Aorta (tissue), 5 donors: ENCODE measurements at regions of chr14 and their contacts with region 1.

Region 1: DNA sequence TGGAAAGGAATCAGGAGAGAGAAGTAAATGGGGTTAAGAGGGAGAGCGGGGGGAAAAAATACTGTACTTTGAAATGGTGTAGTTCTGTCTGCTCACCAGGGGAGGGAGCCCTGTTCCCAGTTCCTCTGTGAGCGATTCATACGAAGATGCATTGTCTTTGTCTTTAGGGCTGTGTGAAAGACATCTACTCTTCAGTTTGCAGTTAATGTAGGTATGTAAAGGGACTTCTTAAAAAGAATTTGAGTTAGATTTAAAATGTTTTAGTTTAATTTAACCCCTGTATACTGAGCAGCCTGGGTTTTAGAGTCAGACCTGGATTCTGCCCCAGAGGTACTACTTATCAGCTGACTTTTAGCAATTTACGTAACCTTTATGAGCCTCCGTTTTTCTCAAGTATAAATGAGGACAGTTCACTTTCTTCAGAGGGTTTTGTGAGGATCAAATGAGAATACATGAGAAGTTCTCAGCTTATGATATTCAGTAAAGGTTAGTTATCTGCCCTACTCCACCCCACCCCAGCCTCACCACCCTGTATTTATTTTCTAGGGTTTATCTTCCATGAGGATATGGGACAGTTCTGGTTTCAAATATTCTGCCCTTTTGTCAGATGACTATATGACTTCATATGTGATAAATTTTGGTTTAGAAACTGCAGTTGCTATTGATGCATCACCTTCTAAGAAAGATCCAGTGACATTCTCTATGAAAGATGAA is 82.5 kb upstream of the EVL start:
- DNase-seq: no peak
- ATAC-seq: peak; percentile 92
- H3K4me3 ChIP-seq: peak overlapping the region in 1 of 2 donors; percentile 28
- H3K27ac ChIP-seq: no peak overlapping the region
- H3K4me1 ChIP-seq: no peaks in the 10 kb centered on the region
- H3K27me3 ChIP-seq: no peaks in the 10 kb centered on the region

Region 2: DNA sequence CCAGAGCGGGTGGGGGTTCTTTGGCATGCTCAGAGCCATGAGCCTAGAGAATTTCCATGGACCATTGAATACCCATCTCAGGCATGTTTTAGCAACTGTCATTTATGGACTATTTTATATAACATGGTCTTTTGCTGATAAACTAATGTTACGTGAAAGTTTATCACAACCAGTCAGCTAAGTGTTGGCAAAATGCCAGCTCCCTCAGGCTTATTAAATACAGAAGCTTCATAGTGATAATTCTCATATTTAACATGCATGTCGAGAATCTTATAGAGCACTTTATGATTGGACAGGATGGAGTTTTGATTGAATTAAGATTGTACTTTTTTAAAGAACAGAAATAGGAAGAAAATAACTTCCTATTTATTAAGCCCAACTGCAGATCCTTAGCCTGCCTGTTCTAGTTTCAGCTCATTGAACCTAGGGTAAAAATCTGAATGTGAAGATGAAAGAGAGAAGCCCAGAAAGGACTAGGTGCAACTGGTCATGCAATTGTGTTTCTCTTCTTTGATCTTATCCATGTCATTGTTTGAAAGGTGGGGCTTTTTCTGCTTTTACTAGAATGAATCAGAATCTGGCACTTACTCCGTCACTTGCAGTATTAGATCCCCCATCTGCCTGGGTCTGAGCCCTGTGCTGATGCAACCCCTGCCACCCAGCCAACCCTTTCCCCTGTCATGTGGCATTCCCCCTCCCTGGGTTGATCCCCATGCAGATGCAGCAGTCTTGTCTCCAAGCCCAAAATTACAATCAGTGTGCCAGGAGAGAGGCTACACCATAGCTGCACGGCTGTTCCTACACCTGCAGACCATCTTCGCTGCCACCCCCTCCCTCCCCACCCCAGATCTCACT is 52.0 kb before region 1 on chr14:
- intact Hi-C with region 1: no loop called
- DNase-seq: no peak
- ATAC-seq: peak; percentile 22
- H3K4me3 ChIP-seq: no peak overlapping the region
- H3K27ac ChIP-seq: no peak overlapping the region
- H3K4me1 ChIP-seq: no peaks in the 10 kb centered on the region
- H3K27me3 ChIP-seq: no peaks in the 10 kb centered on the region

Region 3: GRCh38 chr14:100108042-100108825 is 125.5 kb after region 1 on chr14:
- intact Hi-C with region 1: loop called (anchors 2 kb)
- DNase-seq: peak; percentile 87 to 94
- ATAC-seq: peak; percentile 82
- H3K4me3 ChIP-seq: no peak overlapping the region
- H3K27ac ChIP-seq: no peak overlapping the region
- H3K4me1 ChIP-seq: peaks cover 0 to 5% of the 10 kb centered on the region in 2 donors
- H3K27me3 ChIP-seq: no peaks in the 10 kb centered on the region

Region 4: DNA sequence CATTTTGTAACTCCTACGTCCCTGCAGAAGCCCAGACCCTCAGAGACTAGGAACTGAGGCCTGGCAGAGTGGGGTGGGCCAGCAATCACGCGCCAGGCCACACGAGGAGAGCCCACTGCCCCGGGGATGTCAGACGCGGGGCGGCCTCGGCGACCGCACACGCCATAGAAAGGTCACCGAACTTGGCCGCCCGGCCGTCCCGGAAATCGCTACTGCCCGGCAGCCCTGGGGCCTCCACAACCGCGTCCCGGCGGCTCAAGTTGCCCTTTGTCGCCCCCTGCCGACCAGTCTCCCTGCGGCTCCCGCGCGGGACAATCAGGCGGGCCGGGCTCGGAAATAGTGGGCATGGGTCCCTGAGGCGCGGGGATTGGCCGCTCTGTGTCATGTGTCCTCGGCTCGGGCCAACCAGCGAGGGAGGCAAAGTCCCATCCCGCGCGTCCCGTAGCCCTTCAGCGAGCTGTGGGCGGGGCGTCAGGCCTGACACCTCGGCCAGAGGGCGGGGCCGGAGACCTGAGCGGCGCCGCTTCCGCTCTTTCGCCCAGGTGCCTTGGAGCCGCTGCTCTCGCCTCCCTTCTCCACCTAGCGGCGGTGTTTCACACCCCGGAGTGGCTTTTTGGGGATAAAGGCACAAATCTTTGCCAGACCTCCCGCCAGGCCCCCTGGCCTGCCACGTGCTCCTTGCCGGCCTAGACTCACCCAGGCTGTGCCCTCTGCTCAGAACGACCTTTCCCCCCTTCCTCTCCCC is 210.2 kb after region 1 on chr14:
- intact Hi-C with region 1: loop called (anchors 2 kb)
- DNase-seq: peak; percentile 99 to 100
- ATAC-seq: peak; percentile 99
- H3K4me3 ChIP-seq: no peak overlapping the region
- H3K27ac ChIP-seq: peak overlapping the region in 1 of 2 donors; percentile 86
- H3K4me1 ChIP-seq: no peaks in the 10 kb centered on the region
- H3K27me3 ChIP-seq: no peaks in the 10 kb centered on the region

Region 5: DNA sequence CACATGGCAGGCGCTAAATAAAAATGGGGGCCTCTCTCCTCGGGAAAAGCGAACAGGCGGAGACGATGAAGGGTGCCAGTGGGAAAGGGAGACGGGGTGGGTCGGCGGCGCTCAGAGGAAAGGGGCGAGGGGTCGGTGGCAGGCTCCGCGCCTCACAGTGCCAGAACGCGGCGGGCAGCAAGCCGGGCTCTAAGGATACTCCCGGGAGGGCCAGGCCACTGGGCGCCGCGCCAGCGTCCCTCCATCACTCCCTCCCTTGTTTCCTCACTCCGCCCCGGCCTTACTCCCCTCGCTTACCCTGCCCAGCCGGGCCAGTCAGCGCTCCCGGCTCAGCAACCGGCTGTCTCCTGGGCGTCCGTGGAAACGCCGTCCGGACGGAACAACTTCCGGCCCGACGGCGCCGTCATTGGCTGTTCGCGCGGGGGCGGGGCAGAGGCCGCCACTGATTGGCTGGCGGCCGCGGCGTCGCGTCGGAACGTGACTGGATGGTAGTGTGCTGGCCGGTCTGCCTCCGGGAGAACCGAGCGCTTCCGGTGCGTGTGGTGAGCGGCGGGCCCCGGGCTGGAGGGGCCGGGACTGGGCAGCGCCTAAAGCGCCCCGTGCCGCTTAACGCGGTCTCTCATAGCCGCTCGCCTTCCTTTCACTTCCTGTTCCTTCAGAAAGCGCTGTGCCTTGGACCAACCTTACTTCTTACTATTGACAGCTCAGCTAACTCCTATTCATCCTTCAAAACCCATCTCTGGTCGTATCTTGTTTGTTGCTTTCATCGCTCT is 393.5 kb after region 1 on chr14:
- intact Hi-C with region 1: loop called (anchors 5 to 10 kb)
- DNase-seq: peak; percentile 96 to 97
- ATAC-seq: peak; percentile 98
- H3K4me3 ChIP-seq: peak within 1 kb of the TSS; percentile 46 to 63
- H3K27ac ChIP-seq: peak within 1 kb of the TSS; percentile 66 to 86
- H3K4me1 ChIP-seq: peaks cover 0 to 4% of the 10 kb centered on the region in 2 donors
- H3K27me3 ChIP-seq: no peaks in the 10 kb centered on the region